H1 (cell line): ENCODE measurements at regions of chr2 and their contacts with region 1.

Region 1: GRCh38 chr2:119366649-119367471 is at the starts of genes C2orf76 and DBI:
- DNase-seq: peak; percentile 90 to 94
- H3K4me3 ChIP-seq: peak within 1 kb of the TSS; percentile 83 to 95 (median 86)
- H3K27ac ChIP-seq: peak within 1 kb of the TSS; percentile 24; the same call in 1 of the 2 replicates
- H3K4me1 ChIP-seq: peaks cover 3 to 12% (median 7%) of the 10 kb centered on the region in 4 experiments; a peak in 6 of 7 replicates
- H3K27me3 ChIP-seq: no peaks in the 10 kb centered on the region
- CTCF ChIP-seq: no peak
- EP300 ChIP-seq: peak in 1 of 2 experiments; percentile 64; a peak in 1 of 3 replicates
- POLR2A ChIP-seq: peak; percentile 69 to 87
- RAD21 ChIP-seq: no peak
- total RNA-seq, gene C2orf76: 5.0 and 6.2 TPM in 2 replicates
- total RNA-seq, gene DBI: 180 and 186 TPM in 2 replicates

Region 2: GRCh38 chr2:119305497-119306195 is 61.2 kb before region 1 on chr2:
- CTCF ChIA-PET with region 1: no interaction called
- POLR2A ChIA-PET with region 1: no interaction called
- DNase-seq: no peak
- H3K4me3 ChIP-seq: no peak overlapping the region
- H3K27ac ChIP-seq: no peak overlapping the region
- H3K4me1 ChIP-seq: peaks cover 0 to 6% (median 2%) of the 10 kb centered on the region in 4 experiments; a peak in 4 of 7 replicates
- H3K27me3 ChIP-seq: no peaks in the 10 kb centered on the region
- CTCF ChIP-seq: no peak
- EP300 ChIP-seq: no peak
- POLR2A ChIP-seq: no peak
- RAD21 ChIP-seq: no peak

Region 3: DNA sequence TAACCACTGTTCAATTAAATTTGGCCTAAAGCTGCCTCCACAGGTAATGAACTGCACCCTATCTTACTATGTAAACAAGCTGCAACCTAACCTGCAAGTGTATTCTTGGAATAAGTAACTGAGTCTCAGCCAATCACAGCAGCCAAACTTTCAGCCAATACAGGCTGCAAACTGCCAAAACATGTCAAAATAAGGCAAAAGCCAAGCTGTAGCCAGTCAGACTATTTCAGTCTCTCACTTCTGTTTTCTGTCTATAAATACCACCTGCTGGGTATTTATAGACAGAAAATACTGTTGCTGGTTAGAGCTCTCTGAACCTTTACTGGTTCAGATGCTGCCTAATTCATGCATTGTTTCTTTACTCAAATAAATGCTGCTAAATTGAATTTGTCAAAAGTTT is 14.5 kb before region 1 on chr2:
- CTCF ChIA-PET with region 1: interaction called, 10 read pairs
- POLR2A ChIA-PET with region 1: interaction called, 35 read pairs
- DNase-seq: no peak
- H3K4me3 ChIP-seq: no peak overlapping the region
- H3K27ac ChIP-seq: no peak overlapping the region
- H3K4me1 ChIP-seq: peaks cover 0 to 8% (median 3%) of the 10 kb centered on the region in 4 experiments; a peak in 4 of 7 replicates
- H3K27me3 ChIP-seq: no peaks in the 10 kb centered on the region
- CTCF ChIP-seq: no peak
- EP300 ChIP-seq: no peak
- POLR2A ChIP-seq: no peak
- RAD21 ChIP-seq: no peak